BJ (cell line): ENCODE measurements at regions of chr5 and their contacts with region 1.

Region 1: DNA sequence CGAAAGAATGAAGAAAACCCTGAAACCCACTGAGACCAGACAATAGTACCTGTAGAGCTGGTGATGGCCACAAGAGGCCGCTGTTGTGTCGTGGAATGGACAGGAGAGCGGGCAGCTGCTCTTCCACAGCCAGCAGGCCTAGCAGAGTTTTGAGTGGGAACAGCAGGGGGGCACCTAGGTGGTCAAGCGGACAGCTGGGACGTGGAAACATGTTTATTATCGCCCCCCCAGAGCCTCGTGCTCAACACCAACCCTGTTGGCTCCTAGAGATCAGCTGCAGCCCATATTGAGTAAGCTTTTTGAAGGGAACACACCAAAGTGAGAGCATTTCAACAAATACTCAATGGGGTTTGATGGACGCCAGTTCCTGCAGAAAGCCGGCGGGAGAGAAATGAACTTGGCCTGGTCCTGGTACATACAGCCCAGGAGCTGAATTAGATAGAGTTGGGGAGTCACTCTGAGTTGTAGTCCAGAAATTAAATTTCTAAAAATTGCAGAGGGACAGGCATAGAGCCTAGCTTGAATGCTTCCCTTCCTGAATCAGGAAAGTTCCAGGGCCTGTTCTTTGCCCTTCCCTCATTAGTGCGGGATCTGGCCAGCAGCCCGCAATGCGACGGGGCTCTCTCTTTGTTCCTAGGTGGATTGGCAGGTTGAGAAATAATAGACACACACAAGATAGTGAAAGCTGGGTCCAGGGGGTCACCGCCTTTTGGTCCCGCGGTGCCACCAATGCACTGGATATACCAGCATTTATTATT is 33.8 kb downstream of the MFAP3 start:
- DNase-seq: no peak
- H3K4me3 ChIP-seq: no peak overlapping the region
- H3K27me3 ChIP-seq: no peaks in the 10 kb centered on the region
- CTCF ChIP-seq: peak; percentile 88

Region 2: DNA sequence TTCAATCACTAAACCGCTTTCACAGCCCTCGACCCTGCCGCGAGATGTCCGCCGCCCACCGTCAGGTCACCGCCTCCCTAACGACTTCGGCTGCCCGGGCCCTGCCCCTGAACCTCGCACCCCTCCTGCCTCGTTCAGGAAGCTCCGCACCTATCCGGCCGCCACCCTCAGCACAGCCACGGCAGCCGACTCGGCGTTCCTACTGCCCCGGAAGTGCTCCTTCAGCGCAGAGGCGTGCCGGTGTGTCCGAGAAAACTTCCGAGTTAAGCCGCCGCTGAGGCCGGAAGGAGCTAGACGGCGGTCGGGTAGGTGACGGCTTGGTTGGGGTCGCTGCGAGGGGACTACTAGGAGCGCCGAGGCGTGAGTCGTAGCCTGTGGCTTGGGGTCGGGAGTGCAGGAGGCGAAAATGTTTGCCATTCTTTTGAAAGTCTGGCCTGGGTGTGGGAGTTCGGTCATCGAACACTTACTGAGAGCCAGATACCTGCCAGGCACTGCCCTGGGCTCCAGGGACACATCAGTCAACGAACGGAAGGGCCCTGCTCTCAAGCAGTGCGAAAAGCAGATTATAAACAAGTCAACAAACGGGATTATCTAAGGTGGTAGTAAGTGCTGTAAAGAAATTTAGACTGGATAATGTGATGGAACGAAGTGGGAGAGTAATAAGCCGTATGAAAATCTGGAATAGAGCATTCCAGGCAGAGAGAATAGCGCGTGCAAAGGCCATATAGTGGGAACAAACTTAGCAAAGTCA is 33.7 kb before region 1 on chr5 and contains the starts of genes FAM114A2 and MFAP3:
- CTCF ChIA-PET with region 1: no interaction called
- POLR2A ChIA-PET with region 1: no interaction called
- DNase-seq: no peak
- H3K4me3 ChIP-seq: peak within 1 kb of the TSS; percentile 68
- H3K27me3 ChIP-seq: no peaks in the 10 kb centered on the region
- CTCF ChIP-seq: no peak
- polyA plus RNA-seq, gene FAM114A2: 12.1 and 21.3 TPM in 2 replicates
- polyA plus RNA-seq, gene MFAP3: 24.5 and 47.0 TPM in 2 replicates

Region 3: GRCh38 chr5:154058055-154059038 is 14.2 kb before region 1 on chr5:
- CTCF ChIA-PET with region 1: interaction called, 35 read pairs
- POLR2A ChIA-PET with region 1: no interaction called
- DNase-seq: no peak
- H3K4me3 ChIP-seq: no peak overlapping the region
- H3K27me3 ChIP-seq: no peaks in the 10 kb centered on the region
- CTCF ChIP-seq: no peak

Region 4: DNA sequence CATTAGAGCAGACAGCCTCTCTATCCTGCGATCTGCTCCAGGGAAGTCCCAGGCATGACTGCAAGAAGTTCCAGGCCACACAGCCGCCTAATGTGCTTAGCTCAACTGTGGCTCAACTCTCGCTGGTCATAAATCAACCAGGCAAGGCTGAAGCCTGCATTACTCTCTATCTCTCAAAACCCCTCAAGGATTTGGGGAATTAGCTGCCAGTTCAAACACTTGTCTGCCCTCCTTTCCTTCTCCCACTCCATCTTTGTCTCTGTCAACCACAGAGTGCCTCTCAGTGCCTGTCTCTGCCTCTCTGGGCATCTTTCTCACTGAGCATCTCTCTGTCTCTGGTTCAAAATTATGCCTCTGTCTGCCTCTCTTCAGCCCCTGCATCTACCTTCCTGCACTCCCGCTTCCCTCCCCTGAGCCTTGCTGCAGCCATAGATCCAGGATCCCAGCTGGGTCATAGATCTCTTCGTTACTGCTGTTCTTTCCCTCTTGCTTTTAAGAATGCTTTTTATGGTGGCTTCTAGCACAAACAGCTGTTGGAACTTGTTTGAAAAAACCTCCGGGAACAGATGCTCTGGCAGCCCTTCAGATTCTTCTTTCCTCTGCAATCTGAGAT is 90.1 kb after region 1 on chr5:
- CTCF ChIA-PET with region 1: interaction called, 10 read pairs
- POLR2A ChIA-PET with region 1: no interaction called
- DNase-seq: no peak
- H3K4me3 ChIP-seq: no peak overlapping the region
- H3K27me3 ChIP-seq: peaks cover 10% of the 10 kb centered on the region
- CTCF ChIP-seq: no peak

Region 5: GRCh38 chr5:154179846-154180710 is 107.5 kb after region 1 on chr5:
- CTCF ChIA-PET with region 1: interaction called, 48 read pairs
- POLR2A ChIA-PET with region 1: interaction called, 6 read pairs
- DNase-seq: no peak
- H3K4me3 ChIP-seq: no peak overlapping the region
- H3K27me3 ChIP-seq: 0 out of 2 replicates have a peak, but pooled peaks cover under 1% of the 10 kb centered on the region
- CTCF ChIP-seq: peak; percentile 87

Region 6: DNA sequence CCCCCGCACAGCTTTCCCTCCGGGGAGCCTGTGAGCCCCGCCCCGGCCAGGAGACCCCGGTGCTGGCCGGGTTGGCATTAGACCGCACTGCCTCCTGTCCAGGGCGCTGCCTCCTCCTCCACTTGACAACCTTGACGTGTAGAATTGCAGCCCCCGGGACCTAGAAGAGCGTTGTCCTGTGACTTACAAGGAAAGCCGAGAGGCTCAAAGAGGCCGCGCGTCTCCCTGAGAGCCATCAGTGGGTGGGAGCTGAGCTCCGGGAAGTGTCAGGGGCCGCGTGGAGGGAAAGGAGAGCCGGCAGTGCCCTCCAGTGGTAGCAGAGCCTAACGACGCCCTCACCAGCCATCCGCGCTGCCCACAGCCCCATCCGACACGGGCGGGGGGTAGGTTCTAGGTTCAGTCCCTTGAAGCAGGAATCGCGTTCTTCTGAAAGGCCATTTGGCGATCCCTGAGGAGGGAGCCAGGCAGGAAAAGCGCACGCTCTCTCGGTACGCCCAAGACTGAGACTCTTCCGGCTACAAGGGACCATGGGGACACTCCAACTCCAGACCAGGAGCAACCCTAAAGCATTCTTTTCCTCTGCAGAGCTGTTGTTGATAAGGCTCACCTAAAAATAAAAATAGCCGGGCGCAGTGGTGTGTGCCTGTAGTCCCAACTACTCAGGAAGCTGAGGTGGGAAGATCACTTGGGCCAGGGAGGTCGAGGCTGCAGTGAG is 332.6 kb after region 1 on chr5:
- CTCF ChIA-PET with region 1: interaction called, 112 read pairs
- POLR2A ChIA-PET with region 1: no interaction called
- DNase-seq: no peak
- H3K4me3 ChIP-seq: peak overlapping the region; percentile 27; the same call in 1 of the 2 replicates
- H3K27me3 ChIP-seq: no peaks in the 10 kb centered on the region
- CTCF ChIP-seq: peak; percentile 89

Region 7: GRCh38 chr5:154461531-154461930 is 388.9 kb after region 1 on chr5:
- CTCF ChIA-PET with region 1: interaction called, 19 read pairs
- POLR2A ChIA-PET with region 1: no interaction called
- DNase-seq: no peak
- H3K4me3 ChIP-seq: no peak overlapping the region
- H3K27me3 ChIP-seq: no peaks in the 10 kb centered on the region
- CTCF ChIP-seq: peak; percentile 32; the same call in 1 of the 2 replicates